ENCODE measurements at regions of chr20 and their contacts with region 1.

Region 1: GRCh38 chr20:32052090-32052777 is at the start of gene HCK:
- DNase-seq: no peak
- ATAC-seq: peak; percentile 85
- H3K4me3 ChIP-seq: peak within 1 kb of the TSS; percentile 88
- H3K27ac ChIP-seq: peak within 1 kb of the TSS; percentile 64
- H3K4me1 ChIP-seq: peaks cover 15% of the 10 kb centered on the region
- H3K27me3 ChIP-seq: peaks cover 3 to 7% of the 10 kb centered on the region in 2 experiments
- CTCF ChIP-seq: peak in 1 of 3 experiments; percentile 5; a peak in 1 of 6 replicates
- EP300 ChIP-seq: no peak
- POLR2A ChIP-seq: peak; percentile 55; the same call in 1 of the 2 replicates
- RAD21 ChIP-seq: no peak
- polyA plus RNA-seq, gene HCK: 1.3 to 2.1 TPM

Region 2: DNA sequence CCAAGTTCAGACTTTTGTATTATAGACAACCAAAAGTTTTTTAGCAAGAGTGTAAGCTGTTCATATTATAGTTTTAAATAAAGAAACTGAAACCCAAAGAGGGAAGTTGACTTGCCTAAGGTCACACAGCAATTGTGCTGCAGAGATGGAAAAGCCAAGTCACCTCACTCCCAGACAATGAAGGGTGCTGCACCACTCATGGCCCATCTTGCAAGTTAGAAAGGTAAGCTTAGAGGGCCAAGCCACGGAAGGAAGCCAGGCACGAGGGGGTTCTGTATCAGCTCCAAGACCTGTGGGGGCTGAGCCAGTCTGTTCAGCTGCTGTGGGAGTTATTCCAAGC is 578.2 kb before region 1 on chr20:
- CTCF ChIA-PET with region 1: no interaction called
- POLR2A ChIA-PET with region 1: no interaction called
- RAD21 ChIA-PET with region 1: no interaction called
- SMC1A ChIA-PET with region 1: no interaction called
- in situ Hi-C with region 1: no loop called
- intact Hi-C with region 1: no loop called
- DNase-seq: no peak
- ATAC-seq: peak; percentile 84
- H3K4me3 ChIP-seq: no peak overlapping the region
- H3K27ac ChIP-seq: no peak overlapping the region
- H3K4me1 ChIP-seq: peaks cover 4% of the 10 kb centered on the region
- H3K27me3 ChIP-seq: peaks cover 10 to 13% of the 10 kb centered on the region in 2 experiments
- CTCF ChIP-seq: no peak
- EP300 ChIP-seq: no peak
- POLR2A ChIP-seq: no peak
- RAD21 ChIP-seq: no peak

Region 3: GRCh38 chr20:32007787-32008616 is 44.2 kb before region 1 on chr20:
- CTCF ChIA-PET with region 1: no interaction called
- POLR2A ChIA-PET with region 1: no interaction called
- RAD21 ChIA-PET with region 1: no interaction called
- SMC1A ChIA-PET with region 1: no interaction called
- in situ Hi-C with region 1: no loop called
- intact Hi-C with region 1: no loop called
- DNase-seq: no peak
- ATAC-seq: no peak
- H3K4me3 ChIP-seq: no peak overlapping the region
- H3K27ac ChIP-seq: no peak overlapping the region
- H3K4me1 ChIP-seq: no peaks in the 10 kb centered on the region
- H3K27me3 ChIP-seq: peaks cover 0 to 1% of the 10 kb centered on the region in 2 experiments; a peak in 1 of 4 replicates
- CTCF ChIP-seq: no peak
- EP300 ChIP-seq: no peak
- POLR2A ChIP-seq: no peak
- RAD21 ChIP-seq: no peak

Region 4: DNA sequence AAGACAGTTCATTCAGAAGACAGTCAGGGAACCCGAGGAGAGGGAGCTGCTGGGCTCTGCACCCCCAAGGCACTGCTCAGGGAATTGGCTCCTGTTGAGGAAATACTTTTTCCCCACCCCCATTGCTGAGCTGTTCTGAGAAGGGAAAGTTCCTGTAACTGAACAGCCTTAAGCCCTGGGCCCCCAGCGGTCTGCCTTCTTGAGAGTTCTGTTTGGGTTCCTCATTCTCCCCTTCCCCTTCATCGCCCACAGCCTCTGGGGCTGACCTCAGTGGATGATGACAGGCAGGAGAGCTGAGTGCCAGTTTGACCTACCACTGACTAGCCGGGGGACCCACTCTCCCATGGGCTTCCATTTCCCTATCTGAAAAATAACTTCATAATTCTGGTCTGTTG is 10.5 kb after region 1 on chr20:
- CTCF ChIA-PET with region 1: interaction called, 11 read pairs
- POLR2A ChIA-PET with region 1: interaction called, 86 read pairs
- RAD21 ChIA-PET with region 1: interaction called, 53 read pairs
- SMC1A ChIA-PET with region 1: interaction called, 16 read pairs
- in situ Hi-C with region 1: no loop called
- intact Hi-C with region 1: no loop called
- DNase-seq: peak; percentile 55
- ATAC-seq: peak; percentile 79
- H3K4me3 ChIP-seq: 0 out of 2 replicates have a peak overlapping the region, but pooled peaks have one; percentile 12
- H3K27ac ChIP-seq: peak overlapping the region; percentile 51
- H3K4me1 ChIP-seq: peaks cover 36% of the 10 kb centered on the region
- H3K27me3 ChIP-seq: no peaks in the 10 kb centered on the region
- CTCF ChIP-seq: no peak
- EP300 ChIP-seq: 0 out of 4 replicates have a peak, but pooled peaks of 1 of the 2 experiments have one; percentile 32
- POLR2A ChIP-seq: no peak
- RAD21 ChIP-seq: no peak

Region 5: DNA sequence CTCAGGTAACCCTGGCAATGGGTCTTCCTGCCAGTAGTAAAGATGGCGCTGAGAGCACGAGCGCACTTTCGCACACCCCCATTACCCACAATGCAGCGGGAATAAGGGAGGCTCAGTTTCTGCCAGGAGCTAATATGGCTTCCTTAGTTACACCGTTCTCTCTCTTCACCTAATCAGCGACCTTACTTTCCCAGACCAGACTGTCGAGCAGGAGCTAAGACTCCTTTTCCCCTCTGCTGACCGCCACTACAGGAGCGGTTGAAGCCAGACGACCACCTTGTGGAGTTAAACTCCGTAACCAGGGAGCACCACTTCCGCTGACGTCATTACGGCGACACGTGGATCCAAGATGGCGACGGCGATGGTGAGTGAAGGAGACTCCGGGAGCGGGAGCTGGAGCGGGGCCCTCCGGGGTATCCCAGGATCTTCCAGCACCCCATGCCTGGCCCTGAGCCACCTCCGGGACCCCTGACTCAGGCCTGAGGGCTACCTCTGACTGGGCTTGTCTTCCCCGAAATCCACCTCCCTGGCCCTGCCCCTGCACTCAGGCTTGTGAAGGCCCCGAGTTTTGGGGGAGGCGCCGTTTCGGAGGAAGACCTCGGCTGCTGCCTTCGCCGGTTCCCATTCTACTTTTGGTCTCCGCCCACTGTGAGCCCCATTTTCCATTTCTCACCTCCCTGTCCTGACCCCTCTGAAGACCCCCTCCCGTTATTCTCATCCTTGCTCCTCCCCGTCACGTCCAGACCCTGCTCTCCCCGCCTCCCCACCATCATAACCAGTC is 57.3 kb after region 1 on chr20 and contains the start of gene TM9SF4:
- CTCF ChIA-PET with region 1: no interaction called
- POLR2A ChIA-PET with region 1: no interaction called
- RAD21 ChIA-PET with region 1: no interaction called
- SMC1A ChIA-PET with region 1: no interaction called
- in situ Hi-C with region 1: no loop called
- intact Hi-C with region 1: no loop called
- DNase-seq: peak; percentile 93
- ATAC-seq: peak; percentile 86
- H3K4me3 ChIP-seq: peak within 1 kb of the TSS; percentile 98
- H3K27ac ChIP-seq: peak within 1 kb of the TSS; percentile 97
- H3K4me1 ChIP-seq: peaks cover 15% of the 10 kb centered on the region
- H3K27me3 ChIP-seq: no peaks in the 10 kb centered on the region
- CTCF ChIP-seq: no peak
- EP300 ChIP-seq: no peak
- POLR2A ChIP-seq: peak; percentile 90
- RAD21 ChIP-seq: no peak
- polyA plus RNA-seq, gene TM9SF4: 8.5 to 14.1 TPM